Posterior cingulate gyrus (tissue), 11 donors: ENCODE measurements at regions of chr3 and their contacts with region 1.

Region 1: DNA sequence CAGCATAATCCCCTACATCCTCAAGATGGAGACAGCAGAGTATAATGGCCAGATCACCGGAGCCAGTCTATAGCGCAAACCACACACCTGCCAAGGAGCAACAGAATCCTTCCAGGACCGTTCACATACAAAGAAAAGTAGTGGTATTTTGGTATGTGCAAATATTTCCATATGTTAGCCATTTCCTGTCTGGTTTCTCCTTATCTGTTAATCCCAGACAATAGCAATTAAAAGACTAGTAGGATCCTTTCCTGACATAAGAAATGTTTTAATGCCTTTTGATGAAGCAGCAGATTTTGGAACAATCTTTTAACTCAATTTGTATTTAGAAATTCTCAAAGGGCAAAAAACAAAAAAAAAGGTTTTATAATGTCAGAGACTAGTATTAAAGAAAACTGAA is 22.2 kb downstream of the MRPS25 start:
- DNase-seq: no peak

Region 2: GRCh38 chr3:14959359-14959943 is 83.5 kb before region 1 on chr3:
- intact Hi-C with region 1: loop called (anchors 10 kb)
- DNase-seq: no peak